Activated CD4-positive, alpha-beta T cell treated with anti-CD3 and anti-CD28 coated beads, Interleukin-2, amount 10 ng/mL, durations not matched to agents 7 days and 5 days (primary cell): ENCODE measurements at regions of chr14 and their contacts with region 1.

Region 1: DNA sequence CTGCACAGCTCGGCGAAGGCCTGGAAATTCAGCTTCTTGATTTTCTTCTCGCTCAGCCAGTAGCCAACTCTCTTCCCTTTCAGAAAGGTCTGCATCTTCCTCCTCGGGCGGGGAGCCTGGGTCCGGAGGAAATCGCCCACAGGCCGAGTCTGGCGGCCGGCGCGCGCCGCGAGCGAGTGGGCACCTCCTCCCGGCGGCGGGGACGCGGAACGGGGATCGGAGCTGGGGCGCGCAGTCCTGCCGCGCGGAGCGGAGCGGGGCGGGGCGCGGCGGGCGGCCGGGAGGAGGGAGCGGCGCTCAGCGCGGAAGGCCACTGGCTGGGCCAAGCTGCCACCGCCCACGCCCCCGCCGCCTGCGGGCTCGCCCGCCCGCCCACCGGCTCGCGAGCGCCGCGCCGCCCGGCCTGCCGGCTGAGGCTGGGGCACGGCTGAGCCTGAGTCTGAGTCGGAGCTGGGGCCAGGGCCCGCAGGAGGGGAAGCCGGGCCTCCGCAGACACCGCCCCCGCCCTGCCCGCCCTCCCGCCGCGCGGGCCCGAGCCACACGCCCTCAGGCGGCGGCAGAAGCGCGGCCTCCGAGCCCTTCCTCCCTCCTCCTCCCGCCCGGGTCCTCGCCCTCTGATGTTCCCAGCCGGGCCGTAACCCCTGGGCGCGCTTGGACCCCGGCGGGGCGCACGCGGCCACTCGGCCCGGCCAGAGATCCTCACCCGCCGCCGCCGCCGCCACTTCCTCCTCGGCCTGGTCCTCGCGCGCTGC is 480 bp downstream of the ITPK1 start:
- DNase-seq: peak; percentile 83
- H3K4me3 Mint-ChIP-seq: peak overlapping the region; percentile 83
- H3K27ac Mint-ChIP-seq: peak overlapping the region; percentile 36
- H3K4me1 Mint-ChIP-seq: peaks cover 41% of the 10 kb centered on the region
- H3K27me3 Mint-ChIP-seq: no peaks in the 10 kb centered on the region

Region 2: GRCh38 chr14:93103392-93104080 is 11.7 kb before region 1 on chr14:
- CTCF ChIA-PET with region 1: interaction called, 68 read pairs
- POLR2A ChIA-PET with region 1: no interaction called
- DNase-seq: peak; percentile 90
- H3K4me3 Mint-ChIP-seq: peak overlapping the region; percentile 71
- H3K27ac Mint-ChIP-seq: peak overlapping the region; percentile 98
- H3K4me1 Mint-ChIP-seq: peaks cover 63% of the 10 kb centered on the region
- H3K27me3 Mint-ChIP-seq: no peaks in the 10 kb centered on the region

Region 3: DNA sequence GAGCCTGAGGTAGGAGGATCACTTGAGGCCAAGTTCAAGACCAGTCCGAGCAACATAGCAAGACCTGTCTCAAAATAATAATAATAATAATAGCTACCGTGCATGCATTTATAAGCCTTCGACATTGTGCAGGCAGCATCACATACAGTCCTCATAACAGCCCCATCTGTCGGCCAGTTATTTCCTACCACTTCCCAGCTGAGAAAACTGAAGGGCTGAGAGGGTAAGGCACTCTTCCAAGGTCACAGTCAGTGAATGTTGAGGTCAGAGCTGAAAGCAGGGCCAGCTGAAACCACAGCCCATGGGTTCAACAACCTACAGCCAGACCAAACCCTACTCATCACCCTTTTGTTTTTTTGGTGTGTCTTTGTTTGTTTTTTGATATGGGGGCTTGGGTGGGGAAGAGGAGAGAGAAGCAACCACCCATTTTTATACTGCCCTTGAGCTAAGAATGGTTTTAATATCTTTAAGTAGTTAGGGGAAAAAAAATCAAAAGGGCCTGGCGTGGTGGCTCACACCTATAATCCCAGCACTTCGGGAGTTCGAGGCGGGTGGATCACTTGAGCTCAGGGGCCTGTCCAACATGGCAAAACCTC is 17.3 kb after region 1 on chr14:
- CTCF ChIA-PET with region 1: interaction called, 21 read pairs
- POLR2A ChIA-PET with region 1: interaction called, 3 read pairs
- DNase-seq: peak; percentile 44
- H3K4me3 Mint-ChIP-seq: no peak overlapping the region
- H3K27ac Mint-ChIP-seq: no peak overlapping the region
- H3K4me1 Mint-ChIP-seq: no peaks in the 10 kb centered on the region
- H3K27me3 Mint-ChIP-seq: peaks cover 11% of the 10 kb centered on the region

Region 4: GRCh38 chr14:93137864-93138263 is 22.6 kb after region 1 on chr14:
- CTCF ChIA-PET with region 1: interaction called, 21 read pairs
- POLR2A ChIA-PET with region 1: no interaction called
- DNase-seq: no peak
- H3K4me3 Mint-ChIP-seq: no peak overlapping the region
- H3K27ac Mint-ChIP-seq: no peak overlapping the region
- H3K4me1 Mint-ChIP-seq: peaks cover 5% of the 10 kb centered on the region
- H3K27me3 Mint-ChIP-seq: peaks cover 1% of the 10 kb centered on the region

Region 5: DNA sequence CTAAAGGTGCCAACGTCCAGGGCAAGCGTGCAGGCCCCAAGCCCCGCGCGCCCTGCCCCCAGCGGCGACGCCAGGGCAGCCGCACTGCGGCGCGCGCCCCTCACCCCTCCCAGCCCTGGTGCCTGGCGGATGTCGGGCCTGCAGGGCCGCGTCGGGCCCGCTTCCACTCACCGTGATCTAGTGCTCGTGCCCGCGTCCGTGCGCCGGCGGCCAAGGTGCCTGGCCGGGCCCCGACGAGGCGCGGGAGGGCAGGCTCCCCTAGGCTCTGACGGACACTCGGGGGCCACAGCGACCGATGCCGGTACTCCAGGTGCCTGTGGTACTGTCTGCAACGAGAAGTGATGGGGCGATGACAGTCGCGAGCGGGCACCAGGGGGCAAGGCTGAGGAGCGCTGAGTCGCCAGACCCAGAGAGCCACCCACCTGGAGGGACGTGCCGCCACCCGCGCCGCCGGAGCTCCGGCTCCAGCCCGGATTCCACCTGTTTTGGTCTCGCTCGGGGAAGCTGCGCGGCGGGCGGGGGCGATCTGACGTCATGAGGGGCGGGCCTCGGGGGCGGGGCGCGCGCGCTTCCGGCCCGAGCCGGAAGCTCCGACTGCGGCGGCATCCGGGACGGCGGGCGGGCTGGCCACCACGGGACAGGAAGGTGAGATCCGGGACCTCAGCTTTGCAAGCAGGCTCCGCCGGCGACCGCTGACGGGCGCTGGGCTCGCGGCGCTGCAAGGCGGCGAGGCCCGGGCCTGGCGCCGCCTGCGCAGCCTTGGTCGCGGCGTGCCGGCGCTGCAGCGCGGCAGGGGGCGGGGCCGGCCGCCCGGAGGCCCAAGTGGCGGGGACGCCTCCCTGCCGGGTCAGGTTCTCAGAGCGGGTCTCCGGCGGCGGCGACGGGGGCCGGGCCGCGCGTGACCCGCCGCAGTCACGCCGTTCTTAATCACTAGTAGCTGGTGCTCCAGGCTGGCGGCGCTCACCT is 69.4 kb after region 1 on chr14 and contains the starts of genes LYSET and MOAP1:
- CTCF ChIA-PET with region 1: interaction called, 13 read pairs
- POLR2A ChIA-PET with region 1: no interaction called
- DNase-seq: peak; percentile 91
- H3K4me3 Mint-ChIP-seq: peak within 1 kb of the TSS; percentile 85
- H3K27ac Mint-ChIP-seq: peak within 1 kb of the TSS; percentile 94
- H3K4me1 Mint-ChIP-seq: peaks cover 34% of the 10 kb centered on the region
- H3K27me3 Mint-ChIP-seq: no peaks in the 10 kb centered on the region
- total RNA-seq, gene LYSET: 10.8 to 11.0 TPM
- total RNA-seq, gene MOAP1: 23.3 to 25.3 TPM

Region 6: DNA sequence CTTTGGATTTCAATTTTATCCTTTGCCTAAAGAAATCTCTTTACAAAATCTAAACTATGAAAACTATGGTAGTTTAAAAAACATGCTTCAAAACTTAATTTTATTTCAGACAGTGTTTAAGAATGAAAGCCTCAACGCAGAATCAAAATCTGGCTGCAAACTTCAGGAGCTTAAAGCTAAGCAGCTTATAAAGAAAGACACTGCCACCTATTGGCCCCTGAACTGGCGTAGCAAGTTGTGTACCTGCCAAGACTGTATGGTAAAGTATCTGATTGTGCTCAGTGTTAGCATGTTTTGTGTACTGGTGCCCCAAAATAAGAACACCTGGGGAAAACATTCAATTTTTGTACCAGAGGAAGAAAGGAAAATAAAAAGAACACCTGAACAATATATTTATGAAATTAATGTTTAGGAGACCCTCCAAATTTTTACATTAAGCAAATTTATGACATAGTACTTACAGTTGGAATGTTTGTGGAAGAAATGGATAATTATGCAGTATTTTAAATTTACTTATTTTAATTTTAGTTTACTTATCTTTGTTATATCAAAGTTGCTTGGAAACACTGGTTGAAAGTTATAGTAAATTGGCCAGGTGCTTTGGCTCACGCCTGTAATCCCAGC is 104.0 kb after region 1 on chr14:
- CTCF ChIA-PET with region 1: no interaction called
- POLR2A ChIA-PET with region 1: interaction called, 14 read pairs
- DNase-seq: peak; percentile 69
- H3K4me3 Mint-ChIP-seq: no peak overlapping the region
- H3K27ac Mint-ChIP-seq: no peak overlapping the region
- H3K4me1 Mint-ChIP-seq: peaks cover 4% of the 10 kb centered on the region
- H3K27me3 Mint-ChIP-seq: no peaks in the 10 kb centered on the region